Prostate gland (tissue), 2 donors: ENCODE measurements at regions of chr11 and their contacts with region 1.

Region 1: GRCh38 chr11:60899046-60899936 is 7.1 kb downstream of the PRPF19 start:
- DNase-seq: peak; percentile 46
- H3K4me3 ChIP-seq: no peak overlapping the region
- H3K27ac ChIP-seq: peak overlapping the region in 1 of 2 donors; percentile 32
- H3K4me1 ChIP-seq: no peaks in the 10 kb centered on the region
- H3K27me3 ChIP-seq: no peaks in the 10 kb centered on the region
- CTCF ChIP-seq: peak; percentile 67 to 88 (median 86)
- POLR2A ChIP-seq: no peak

Region 2: DNA sequence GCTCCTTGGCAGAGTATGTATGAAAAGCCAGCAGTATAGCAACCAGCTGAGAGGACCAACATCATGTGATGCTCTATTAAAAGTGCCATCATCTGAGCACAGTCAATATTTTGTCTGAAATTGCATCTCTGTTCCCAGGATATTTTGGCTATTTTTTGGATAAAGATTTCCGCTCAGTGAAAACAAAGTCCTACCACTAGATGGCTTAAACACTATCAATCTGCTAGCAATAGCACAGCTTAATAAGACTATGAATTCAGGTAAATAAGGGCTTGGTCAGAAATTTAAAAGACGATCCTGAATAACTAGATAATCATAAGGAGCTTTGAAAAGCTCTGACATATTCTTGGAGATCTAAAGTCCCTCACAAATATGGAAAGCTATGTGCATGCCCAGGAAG is 309.7 kb before region 1 on chr11:
- intact Hi-C with region 1: no loop called
- DNase-seq: no peak
- H3K4me3 ChIP-seq: no peak overlapping the region
- H3K27ac ChIP-seq: no peak overlapping the region
- H3K4me1 ChIP-seq: no peaks in the 10 kb centered on the region
- H3K27me3 ChIP-seq: no peaks in the 10 kb centered on the region
- CTCF ChIP-seq: no peak
- POLR2A ChIP-seq: no peak

Region 3: DNA sequence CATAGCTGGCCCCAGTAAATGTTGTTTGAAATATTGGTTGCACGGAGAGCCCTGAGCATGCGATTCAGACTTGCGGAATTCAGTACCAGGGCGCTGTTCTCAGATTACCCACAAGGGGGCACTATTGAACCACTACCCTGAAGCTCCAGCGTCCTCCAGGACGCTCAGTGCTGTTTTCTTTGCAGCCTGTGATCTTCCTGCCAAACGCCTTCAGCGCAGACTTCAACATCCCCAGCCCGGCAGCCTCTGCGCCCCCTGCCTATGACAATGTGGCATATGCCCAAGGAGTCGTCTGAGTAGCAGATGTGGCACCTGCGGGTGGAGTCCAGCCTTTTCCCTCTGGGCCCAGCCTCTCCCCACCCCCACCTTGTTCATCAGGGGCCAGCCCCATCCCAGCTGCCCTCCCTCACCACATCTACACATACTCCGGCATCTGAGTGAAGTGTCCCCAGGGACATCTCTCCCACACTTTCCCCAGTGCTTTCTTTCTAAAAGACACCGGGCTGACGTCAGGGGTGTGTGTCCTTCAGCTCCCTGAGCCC is 123.8 kb before region 1 on chr11:
- intact Hi-C with region 1: loop called (anchors 5 kb)
- DNase-seq: peak; percentile 87
- H3K4me3 ChIP-seq: no peak overlapping the region
- H3K27ac ChIP-seq: peak overlapping the region in 1 of 2 donors; percentile 19
- H3K4me1 ChIP-seq: no peaks in the 10 kb centered on the region
- H3K27me3 ChIP-seq: no peaks in the 10 kb centered on the region
- CTCF ChIP-seq: peak; percentile 76 to 90 (median 90)
- POLR2A ChIP-seq: no peak

Region 4: DNA sequence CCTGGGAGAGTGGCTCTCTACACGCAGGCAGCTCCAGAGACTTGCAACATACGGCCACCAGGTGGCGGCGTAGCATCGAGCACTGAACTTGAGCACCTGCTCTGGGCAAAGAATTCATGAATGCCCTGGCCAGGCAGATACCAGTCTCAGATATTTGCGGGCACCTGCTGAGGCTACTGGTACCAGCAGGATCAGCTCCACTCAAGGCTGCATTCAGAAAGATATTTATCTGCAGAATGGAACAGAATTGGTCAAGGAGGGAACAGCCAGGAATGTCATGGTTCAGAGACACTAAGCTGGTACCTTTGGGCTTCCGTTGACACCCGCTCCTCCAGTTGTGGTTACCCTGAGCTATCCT is 68.2 kb before region 1 on chr11:
- intact Hi-C with region 1: loop called (anchors 1 kb)
- DNase-seq: peak; percentile 86
- H3K4me3 ChIP-seq: no peak overlapping the region
- H3K27ac ChIP-seq: no peak overlapping the region
- H3K4me1 ChIP-seq: no peaks in the 10 kb centered on the region
- H3K27me3 ChIP-seq: no peaks in the 10 kb centered on the region
- CTCF ChIP-seq: peak; percentile 67 to 96 (median 94)
- POLR2A ChIP-seq: no peak